Activated CD8-positive, alpha-beta T cell treated with anti-CD3 and anti-CD28 coated beads for 36 hours (primary cell): ENCODE measurements at regions of chr7 and their contacts with region 1.

Region 1: DNA sequence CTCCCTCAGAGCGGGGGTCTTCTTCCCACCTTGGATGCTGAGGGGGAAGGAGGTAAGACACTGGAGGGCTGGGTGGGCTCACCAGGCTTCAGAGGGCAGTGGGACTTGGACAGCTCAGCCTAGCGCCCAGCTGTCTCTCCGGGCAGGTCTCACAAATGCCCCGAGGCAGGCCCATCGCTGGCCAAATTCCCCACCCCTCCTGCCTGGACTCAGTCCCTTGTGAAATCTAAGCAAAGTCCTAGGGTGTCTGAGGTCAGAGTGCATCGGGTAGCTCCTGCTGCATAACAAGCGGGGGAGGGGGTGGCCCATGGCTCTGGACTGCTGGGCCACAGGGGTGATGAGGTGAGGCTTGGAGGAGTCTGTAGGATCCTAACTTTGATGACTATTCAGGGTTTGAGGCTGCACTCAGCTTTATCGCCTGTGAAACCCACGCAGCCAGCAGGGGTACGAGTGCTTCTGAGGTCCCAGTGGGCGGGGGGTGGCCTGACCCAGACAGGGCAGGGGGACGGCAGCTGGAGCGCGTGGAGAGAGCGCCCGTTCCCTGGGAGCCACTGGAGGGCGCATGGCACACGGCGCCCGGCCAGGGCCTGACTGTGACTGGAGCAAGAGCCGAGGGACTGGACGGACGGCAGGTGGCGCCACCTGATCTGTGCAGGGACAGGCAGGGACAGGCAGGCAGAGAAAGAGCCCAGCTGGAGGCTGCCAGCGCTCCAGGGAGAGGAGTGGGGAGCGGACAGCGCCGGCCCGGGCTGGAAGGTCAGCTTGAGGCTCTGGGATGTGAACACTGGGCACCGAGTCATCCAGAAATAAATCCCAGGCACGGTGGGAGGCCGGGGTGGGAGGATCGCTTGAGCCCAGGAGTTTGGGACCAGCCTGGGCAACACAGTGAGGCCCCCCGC is 10.0 kb downstream of the CYP2W1 start:
- DNase-seq: peak; percentile 96
- ATAC-seq: peak; percentile 98
- H3K4me3 Mint-ChIP-seq: no peak overlapping the region
- H3K27ac Mint-ChIP-seq: no peak overlapping the region
- H3K4me1 Mint-ChIP-seq: peaks cover 5% of the 10 kb centered on the region
- H3K27me3 Mint-ChIP-seq: no peaks in the 10 kb centered on the region
- CTCF ChIP-seq: peak; percentile 97

Region 2: DNA sequence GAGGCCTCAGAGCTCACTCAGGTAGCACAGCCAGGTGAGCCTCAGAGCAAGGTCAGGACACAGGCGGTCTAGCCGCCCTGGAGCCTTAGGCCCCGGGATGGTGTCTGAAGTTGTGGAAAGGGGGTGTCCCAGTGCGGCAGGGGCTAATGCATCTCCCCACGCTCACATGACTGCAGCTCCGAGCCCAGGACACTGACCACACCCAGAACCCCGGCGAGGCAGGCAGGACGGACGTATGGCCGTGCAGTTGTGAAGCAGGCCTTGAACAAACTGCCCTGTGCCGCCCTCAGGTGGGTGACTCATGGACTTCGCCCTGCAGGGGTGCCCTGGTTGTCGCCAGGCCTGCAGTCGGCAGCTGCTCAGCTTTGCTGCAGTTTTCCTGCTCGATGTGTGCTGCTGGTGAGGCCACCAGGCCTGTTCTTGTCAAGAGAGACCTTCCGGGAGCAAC is 260.8 kb before region 1 on chr7:
- CTCF ChIA-PET with region 1: no interaction called
- POLR2A ChIA-PET with region 1: no interaction called
- intact Hi-C with region 1: no loop called
- DNase-seq: peak; percentile 16
- ATAC-seq: peak; percentile 43
- H3K4me3 Mint-ChIP-seq: no peak overlapping the region
- H3K27ac Mint-ChIP-seq: no peak overlapping the region
- H3K4me1 Mint-ChIP-seq: peaks cover 17% of the 10 kb centered on the region
- H3K27me3 Mint-ChIP-seq: no peaks in the 10 kb centered on the region
- CTCF ChIP-seq: no peak

Region 3: GRCh38 chr7:966291-967069 is 26.5 kb before region 1 on chr7:
- CTCF ChIA-PET with region 1: interaction called, 14 read pairs
- POLR2A ChIA-PET with region 1: interaction called, 3 read pairs
- intact Hi-C with region 1: no loop called
- DNase-seq: no peak
- ATAC-seq: no peak
- H3K4me3 Mint-ChIP-seq: no peak overlapping the region
- H3K27ac Mint-ChIP-seq: peak overlapping the region; percentile 3
- H3K4me1 Mint-ChIP-seq: peaks cover 28% of the 10 kb centered on the region
- H3K27me3 Mint-ChIP-seq: no peaks in the 10 kb centered on the region
- CTCF ChIP-seq: no peak

Region 4: DNA sequence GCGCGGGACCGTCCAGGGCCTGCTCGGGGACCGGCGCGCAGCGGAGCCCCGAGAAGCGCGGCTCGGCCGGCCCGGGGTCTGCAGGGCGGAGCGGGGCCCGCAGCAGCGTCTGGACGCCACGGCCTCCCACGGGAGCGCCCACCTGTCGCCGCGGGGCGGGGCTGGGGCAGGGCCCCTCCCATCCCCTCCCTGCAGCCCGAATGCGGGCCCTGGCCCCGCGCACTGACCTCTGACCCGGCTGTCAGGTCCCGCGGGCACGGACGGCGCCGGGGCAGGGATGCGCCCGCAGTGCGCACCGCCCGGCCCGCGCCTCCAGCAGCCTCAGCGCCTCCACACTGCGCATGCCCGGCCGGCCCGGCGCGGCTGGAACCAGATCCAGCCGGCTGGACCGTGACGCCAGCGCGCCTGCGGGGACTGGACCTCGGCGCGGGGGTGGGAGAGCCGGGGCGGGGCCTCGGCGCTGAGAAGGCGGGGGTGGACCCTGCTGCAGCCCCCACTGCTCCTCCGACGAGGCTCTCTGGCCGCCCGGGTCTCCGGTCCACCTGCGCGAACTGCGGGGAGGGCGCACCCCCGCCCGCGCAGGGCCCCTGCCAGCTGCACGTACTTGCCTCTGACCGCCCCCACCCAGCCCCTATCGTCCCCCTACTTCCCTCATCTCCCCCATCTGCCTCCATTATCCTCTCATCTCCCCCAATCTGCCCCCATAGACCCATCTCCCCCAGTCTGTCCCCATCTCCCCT is 35.2 kb after region 1 on chr7:
- CTCF ChIA-PET with region 1: interaction called, 11 read pairs
- POLR2A ChIA-PET with region 1: no interaction called
- intact Hi-C with region 1: no loop called
- DNase-seq: peak; percentile 92
- ATAC-seq: peak; percentile 84
- H3K4me3 Mint-ChIP-seq: peak overlapping the region; percentile 52
- H3K27ac Mint-ChIP-seq: peak overlapping the region; percentile 63
- H3K4me1 Mint-ChIP-seq: peaks cover 29% of the 10 kb centered on the region
- H3K27me3 Mint-ChIP-seq: no peaks in the 10 kb centered on the region
- CTCF ChIP-seq: no peak

Region 5: DNA sequence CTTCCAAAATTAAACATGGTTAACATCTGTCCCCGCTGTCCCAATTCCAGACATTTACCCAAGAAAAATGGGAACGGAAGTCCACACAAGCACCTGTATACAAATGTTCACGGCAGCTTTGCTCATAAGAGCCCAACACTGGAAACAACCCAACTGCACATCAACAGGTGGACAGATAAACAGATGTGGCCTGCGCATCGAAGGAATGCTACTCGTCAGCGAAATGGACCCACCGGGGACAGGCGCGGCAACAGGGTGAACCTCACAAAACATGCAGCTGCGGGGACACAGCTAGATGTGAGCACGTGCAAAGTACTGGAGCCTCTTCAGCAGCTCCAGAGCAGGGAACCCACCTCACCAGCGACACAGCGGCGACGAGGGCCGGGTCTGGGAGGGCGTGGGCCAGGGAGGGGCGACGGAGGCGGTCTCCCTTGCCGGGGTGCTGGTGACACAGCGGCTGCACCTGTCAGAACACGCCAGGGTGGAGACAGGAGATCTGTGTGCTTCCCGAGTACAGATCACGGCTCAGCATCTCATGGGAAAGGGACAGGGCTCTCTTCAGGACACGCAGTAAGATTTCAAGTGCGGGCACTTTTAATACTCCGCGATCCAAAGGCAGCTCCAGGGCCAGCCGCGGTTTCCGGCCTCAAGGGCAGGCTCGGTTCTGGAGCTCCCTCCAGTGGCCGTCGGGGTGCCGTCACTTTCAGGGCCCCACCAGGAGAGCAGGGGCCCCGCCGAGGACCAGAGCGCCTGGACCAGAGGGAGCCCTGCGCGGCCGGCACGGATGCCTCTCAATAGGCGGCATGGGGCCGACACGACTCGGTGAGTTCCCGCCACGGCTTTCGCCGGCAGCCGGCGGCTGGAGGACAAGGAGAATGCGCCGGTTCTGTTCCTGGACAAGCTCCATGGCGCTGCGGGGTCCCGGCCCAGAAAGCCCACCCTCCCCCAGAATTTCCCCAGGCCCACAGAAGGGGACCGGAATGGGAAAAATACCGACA is 72.6 kb after region 1 on chr7:
- CTCF ChIA-PET with region 1: interaction called, 204 read pairs
- POLR2A ChIA-PET with region 1: interaction called, 13 read pairs
- intact Hi-C with region 1: loop called (anchors 5 kb)
- DNase-seq: peak; percentile 89
- ATAC-seq: peak; percentile 98
- H3K4me3 Mint-ChIP-seq: no peak overlapping the region
- H3K27ac Mint-ChIP-seq: no peak overlapping the region
- H3K4me1 Mint-ChIP-seq: peaks cover 4% of the 10 kb centered on the region
- H3K27me3 Mint-ChIP-seq: no peaks in the 10 kb centered on the region
- CTCF ChIP-seq: peak; percentile 95

Region 6: DNA sequence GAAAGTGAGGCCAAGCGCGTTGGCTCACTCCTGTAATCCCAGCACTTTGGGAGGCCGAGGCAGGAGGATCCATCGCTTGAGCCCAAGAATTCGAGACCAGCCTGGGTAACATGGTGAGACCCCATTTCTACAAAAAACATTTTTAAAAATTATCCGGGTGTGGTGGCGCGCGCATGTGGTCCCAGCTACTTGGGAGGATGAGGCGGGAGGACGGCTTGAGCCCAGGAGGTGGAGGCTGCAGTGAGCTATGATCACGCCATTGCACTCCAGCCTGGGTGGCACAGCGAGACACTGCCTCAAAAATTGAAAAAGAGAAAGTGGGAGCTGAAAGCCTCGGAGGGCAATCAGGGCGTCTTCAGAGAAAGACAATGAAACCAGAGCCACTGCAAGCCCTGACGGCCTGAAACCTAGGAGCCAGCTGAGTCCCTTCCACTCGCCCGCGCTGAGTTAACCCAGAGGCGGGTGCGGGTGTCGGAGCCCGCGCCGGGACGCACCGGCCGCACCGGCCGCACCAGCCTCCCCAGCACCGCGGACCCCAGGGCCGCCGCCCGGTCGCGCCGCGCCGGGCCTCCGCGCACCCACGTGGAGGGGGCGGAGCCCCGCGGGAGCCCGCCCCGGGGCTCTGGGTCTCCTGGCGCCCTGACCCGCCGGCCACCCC is 144.7 kb after region 1 on chr7:
- CTCF ChIA-PET with region 1: interaction called, 14 read pairs
- POLR2A ChIA-PET with region 1: no interaction called
- intact Hi-C with region 1: no loop called
- DNase-seq: peak; percentile 27
- ATAC-seq: peak; percentile 66
- H3K4me3 Mint-ChIP-seq: peak overlapping the region; percentile 79
- H3K27ac Mint-ChIP-seq: peak overlapping the region; percentile 71
- H3K4me1 Mint-ChIP-seq: peaks cover 16% of the 10 kb centered on the region
- H3K27me3 Mint-ChIP-seq: no peaks in the 10 kb centered on the region
- CTCF ChIP-seq: peak; percentile 18

Region 7: DNA sequence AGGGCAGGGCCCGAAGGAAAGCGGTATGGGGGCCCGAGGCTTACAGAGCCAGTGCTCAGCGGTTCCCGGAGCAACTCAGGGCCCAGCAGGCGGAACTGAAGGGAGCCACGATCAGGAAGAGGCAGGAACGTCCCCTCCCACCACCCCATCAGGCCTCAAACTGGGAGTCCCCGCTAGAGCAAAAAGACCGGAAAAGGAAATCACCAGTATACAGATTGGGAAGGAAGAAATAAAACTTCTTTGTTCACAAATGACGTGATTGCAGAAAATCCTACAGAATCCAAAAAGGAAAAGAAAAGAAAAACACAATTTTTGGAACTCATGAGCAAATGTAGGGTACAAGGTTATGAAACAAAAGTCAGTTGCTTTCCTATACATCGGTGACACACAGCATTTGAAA is 188.7 kb after region 1 on chr7:
- CTCF ChIA-PET with region 1: interaction called, 87 read pairs
- POLR2A ChIA-PET with region 1: interaction called, 4 read pairs
- intact Hi-C with region 1: no loop called
- DNase-seq: no peak
- ATAC-seq: no peak
- H3K4me3 Mint-ChIP-seq: no peak overlapping the region
- H3K27ac Mint-ChIP-seq: no peak overlapping the region
- H3K4me1 Mint-ChIP-seq: peaks cover 4% of the 10 kb centered on the region
- H3K27me3 Mint-ChIP-seq: peaks cover 28% of the 10 kb centered on the region
- CTCF ChIP-seq: no peak